GM12878 (cell line): ENCODE measurements at regions of chr9 and their contacts with region 1.

Region 1: GRCh38 chr9:83511051-83511450 is 27.1 kb downstream of the FRMD3 start:
- DNase-seq: peak; percentile 34
- ATAC-seq: peak; percentile 99
- H3K4me3 ChIP-seq: no peak overlapping the region
- H3K27ac ChIP-seq: no peak overlapping the region
- H3K4me1 ChIP-seq: 0 out of 2 replicates have a peak, but pooled peaks cover 2% of the 10 kb centered on the region
- H3K27me3 ChIP-seq: no peaks in the 10 kb centered on the region
- CTCF ChIP-seq: no peak
- EP300 ChIP-seq: no peak
- POLR2A ChIP-seq: no peak
- RAD21 ChIP-seq: no peak

Region 2: GRCh38 chr9:83569326-83569725 is 58.3 kb after region 1 on chr9:
- CTCF ChIA-PET with region 1: no interaction called
- POLR2A ChIA-PET with region 1: no interaction called
- RAD21 ChIA-PET with region 1: no interaction called
- SMC1A ChIA-PET with region 1: no interaction called
- in situ Hi-C with region 1: loop called (anchors 5 kb)
- intact Hi-C with region 1: no loop called
- DNase-seq: no peak
- ATAC-seq: no peak
- H3K4me3 ChIP-seq: no peak overlapping the region
- H3K27ac ChIP-seq: no peak overlapping the region
- H3K4me1 ChIP-seq: peaks cover 4% of the 10 kb centered on the region; the same call in 1 of the 2 replicates
- H3K27me3 ChIP-seq: no peaks in the 10 kb centered on the region
- CTCF ChIP-seq: no peak
- EP300 ChIP-seq: no peak
- POLR2A ChIP-seq: no peak
- RAD21 ChIP-seq: no peak

Region 3: GRCh38 chr9:83688921-83689320 is 177.9 kb after region 1 on chr9:
- CTCF ChIA-PET with region 1: no interaction called
- POLR2A ChIA-PET with region 1: no interaction called
- RAD21 ChIA-PET with region 1: no interaction called
- SMC1A ChIA-PET with region 1: no interaction called
- in situ Hi-C with region 1: no loop called
- intact Hi-C with region 1: loop called (anchors 5 kb)
- DNase-seq: no peak
- ATAC-seq: peak; percentile 21
- H3K4me3 ChIP-seq: no peak overlapping the region
- H3K27ac ChIP-seq: no peak overlapping the region
- H3K4me1 ChIP-seq: peaks cover 10% of the 10 kb centered on the region
- H3K27me3 ChIP-seq: no peaks in the 10 kb centered on the region
- CTCF ChIP-seq: no peak
- EP300 ChIP-seq: no peak
- POLR2A ChIP-seq: no peak
- RAD21 ChIP-seq: no peak